Activated CD4-positive, alpha-beta T cell treated with anti-CD3 and anti-CD28 coated beads, Interleukin-2, amount 10 ng/mL, durations not matched to agents 24 days and 14 days (primary cell): ENCODE measurements at regions of chr12 and their contacts with region 1.

Region 1: GRCh38 chr12:98516184-98516873 is 939 bp downstream of the TMPO start:
- DNase-seq: peak; percentile 95
- H3K4me3 Mint-ChIP-seq: peak overlapping the region; percentile 92
- H3K27ac Mint-ChIP-seq: peak overlapping the region; percentile 97
- H3K4me1 Mint-ChIP-seq: peaks cover 30% of the 10 kb centered on the region
- H3K27me3 Mint-ChIP-seq: no peaks in the 10 kb centered on the region

Region 2: DNA sequence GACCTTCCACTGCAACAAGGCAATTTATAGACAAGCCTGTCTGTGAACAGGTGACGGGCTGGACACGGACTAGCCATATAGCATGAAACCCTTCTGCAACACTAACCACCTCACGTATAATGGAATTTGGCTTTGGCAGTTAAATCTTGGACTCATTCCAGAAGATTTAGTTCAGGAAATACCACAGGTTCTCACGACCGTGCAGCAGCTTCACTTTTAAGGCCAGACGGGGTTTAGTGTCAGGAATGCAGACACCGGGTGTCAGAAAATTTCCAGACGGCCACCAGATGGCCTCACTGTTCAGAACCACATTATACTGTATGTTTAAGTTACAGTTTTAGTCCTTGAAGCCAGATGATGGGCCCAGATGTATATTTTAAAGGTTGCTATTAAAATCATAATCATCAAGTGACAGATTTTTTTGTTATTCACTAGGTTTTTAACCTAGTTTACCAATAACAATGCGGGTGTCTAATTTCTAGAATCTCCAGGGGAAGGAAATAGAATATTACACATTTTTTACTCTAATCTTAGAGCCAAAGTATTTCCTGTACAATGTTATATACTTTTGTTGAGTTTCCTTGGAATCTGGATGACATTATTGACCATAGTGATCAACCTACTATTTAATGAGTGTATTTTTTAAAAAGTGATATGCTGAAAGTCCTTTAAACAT is 91.5 kb before region 1 on chr12:
- intact Hi-C with region 1: loop called (anchors 1 kb)
- DNase-seq: peak; percentile 85
- H3K4me3 Mint-ChIP-seq: no peak overlapping the region
- H3K27ac Mint-ChIP-seq: no peak overlapping the region
- H3K4me1 Mint-ChIP-seq: peaks cover 2% of the 10 kb centered on the region
- H3K27me3 Mint-ChIP-seq: peaks cover 9% of the 10 kb centered on the region

Region 3: GRCh38 chr12:98490501-98491453 is 25.6 kb before region 1 on chr12:
- intact Hi-C with region 1: loop called (anchors 1 kb)
- DNase-seq: peak; percentile 94
- H3K4me3 Mint-ChIP-seq: peak overlapping the region; percentile 44
- H3K27ac Mint-ChIP-seq: peak overlapping the region; percentile 91
- H3K4me1 Mint-ChIP-seq: peaks cover 7% of the 10 kb centered on the region
- H3K27me3 Mint-ChIP-seq: peaks cover 12% of the 10 kb centered on the region

Region 4: GRCh38 chr12:98532681-98533304 is 16.5 kb after region 1 on chr12:
- intact Hi-C with region 1: loop called (anchors 2 kb)
- DNase-seq: peak; percentile 78
- H3K4me3 Mint-ChIP-seq: no peak overlapping the region
- H3K27ac Mint-ChIP-seq: peak overlapping the region; percentile 52
- H3K4me1 Mint-ChIP-seq: peaks cover 22% of the 10 kb centered on the region
- H3K27me3 Mint-ChIP-seq: no peaks in the 10 kb centered on the region

Region 5: GRCh38 chr12:98644711-98645402 is 128.5 kb after region 1 on chr12 and contains the starts of genes APAF1 and IKBIP:
- intact Hi-C with region 1: loop called (anchors 1 kb)
- DNase-seq: peak; percentile 99
- H3K4me3 Mint-ChIP-seq: peak within 1 kb of the TSS; percentile 92
- H3K27ac Mint-ChIP-seq: peak within 1 kb of the TSS; percentile 95
- H3K4me1 Mint-ChIP-seq: peaks cover 21% of the 10 kb centered on the region
- H3K27me3 Mint-ChIP-seq: no peaks in the 10 kb centered on the region
- total RNA-seq, gene APAF1: 19.9 and 20.7 TPM in 2 replicates
- total RNA-seq, gene IKBIP: 35.0 and 36.9 TPM in 2 replicates